GM10248 (cell line): ENCODE measurements at regions of chr12 and their contacts with region 1.

Region 1: DNA sequence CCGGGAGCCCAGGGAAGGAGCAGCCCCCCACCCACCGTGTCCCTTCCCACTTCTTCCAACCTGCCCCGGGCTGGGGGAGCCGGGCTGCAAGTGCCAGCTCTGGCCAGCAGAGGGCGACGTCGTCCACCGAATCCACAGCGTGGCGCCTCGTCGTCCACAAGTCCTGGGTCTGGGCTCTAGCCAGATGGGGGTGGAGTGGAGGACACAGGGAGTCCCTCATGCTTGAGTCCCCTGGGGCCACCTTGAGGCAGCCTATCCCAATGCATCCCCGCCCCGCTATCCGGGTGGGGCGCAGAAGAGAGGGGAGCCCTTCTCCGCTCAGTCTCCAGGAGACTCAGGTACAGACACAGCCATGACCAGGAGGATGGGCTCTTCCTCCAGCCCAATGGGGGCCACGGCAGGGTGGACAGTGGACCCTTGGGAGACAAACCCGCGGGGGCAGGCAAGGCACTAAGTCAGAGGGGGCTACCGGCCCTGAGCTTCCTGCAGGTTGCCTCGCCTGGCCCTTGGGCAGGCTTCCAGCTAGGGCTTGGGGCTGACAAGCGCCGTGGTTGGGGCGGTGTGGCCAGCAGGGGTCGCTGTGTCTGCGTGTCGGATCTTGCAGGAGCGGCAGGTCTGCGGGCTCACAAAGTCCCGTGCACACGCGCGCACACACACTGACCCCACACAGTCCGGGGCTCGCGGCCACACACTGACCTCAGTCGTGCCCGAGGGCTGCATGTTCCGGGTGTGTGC is 5.5 kb downstream of the AQP5 start:
- DNase-seq: peak; percentile 91
- CTCF ChIP-seq: peak; percentile 98

Region 2: GRCh38 chr12:49750027-49750995 is 216.9 kb before region 1 on chr12:
- CTCF ChIA-PET with region 1: no interaction called
- POLR2A ChIA-PET with region 1: no interaction called
- DNase-seq: no peak
- CTCF ChIP-seq: peak; percentile 21

Region 3: DNA sequence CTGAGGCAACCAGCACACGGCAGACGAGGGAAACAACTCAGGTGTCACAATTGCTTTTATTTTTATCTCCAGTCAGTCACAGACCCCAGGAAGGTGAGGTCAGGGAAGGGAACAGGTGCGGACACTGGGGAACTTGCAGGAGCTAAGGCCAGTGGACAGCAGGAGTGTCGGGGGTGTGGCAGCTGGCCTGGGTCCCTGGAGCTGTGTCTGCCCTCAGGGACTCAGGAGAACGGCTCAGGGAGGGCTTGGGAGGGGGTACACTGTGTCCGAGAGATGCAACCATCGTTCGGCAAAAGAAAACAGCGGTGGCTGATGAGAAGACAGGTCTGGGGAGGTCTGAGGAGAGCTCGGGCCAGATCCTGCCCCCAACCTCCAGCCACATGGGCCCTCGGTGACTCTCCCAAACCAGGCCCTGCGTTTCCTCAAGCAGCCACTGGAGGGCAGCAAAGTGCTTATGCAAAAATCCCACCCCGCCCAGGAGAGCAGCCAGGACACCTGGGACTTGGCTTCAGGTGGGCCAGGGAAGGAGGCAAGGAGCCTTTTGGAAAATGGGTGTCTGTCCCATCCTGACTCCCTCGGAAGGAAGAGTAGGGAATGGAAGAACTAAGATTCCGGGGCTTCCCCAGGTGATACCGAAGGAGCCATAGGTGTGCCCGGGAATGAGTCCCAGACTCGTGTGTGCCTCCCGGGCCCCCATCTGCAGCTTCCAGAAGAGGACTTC is 100.2 kb before region 1 on chr12:
- CTCF ChIA-PET with region 1: interaction called, 12 read pairs
- POLR2A ChIA-PET with region 1: no interaction called
- DNase-seq: peak; percentile 93
- CTCF ChIP-seq: peak; percentile 94

Region 4: DNA sequence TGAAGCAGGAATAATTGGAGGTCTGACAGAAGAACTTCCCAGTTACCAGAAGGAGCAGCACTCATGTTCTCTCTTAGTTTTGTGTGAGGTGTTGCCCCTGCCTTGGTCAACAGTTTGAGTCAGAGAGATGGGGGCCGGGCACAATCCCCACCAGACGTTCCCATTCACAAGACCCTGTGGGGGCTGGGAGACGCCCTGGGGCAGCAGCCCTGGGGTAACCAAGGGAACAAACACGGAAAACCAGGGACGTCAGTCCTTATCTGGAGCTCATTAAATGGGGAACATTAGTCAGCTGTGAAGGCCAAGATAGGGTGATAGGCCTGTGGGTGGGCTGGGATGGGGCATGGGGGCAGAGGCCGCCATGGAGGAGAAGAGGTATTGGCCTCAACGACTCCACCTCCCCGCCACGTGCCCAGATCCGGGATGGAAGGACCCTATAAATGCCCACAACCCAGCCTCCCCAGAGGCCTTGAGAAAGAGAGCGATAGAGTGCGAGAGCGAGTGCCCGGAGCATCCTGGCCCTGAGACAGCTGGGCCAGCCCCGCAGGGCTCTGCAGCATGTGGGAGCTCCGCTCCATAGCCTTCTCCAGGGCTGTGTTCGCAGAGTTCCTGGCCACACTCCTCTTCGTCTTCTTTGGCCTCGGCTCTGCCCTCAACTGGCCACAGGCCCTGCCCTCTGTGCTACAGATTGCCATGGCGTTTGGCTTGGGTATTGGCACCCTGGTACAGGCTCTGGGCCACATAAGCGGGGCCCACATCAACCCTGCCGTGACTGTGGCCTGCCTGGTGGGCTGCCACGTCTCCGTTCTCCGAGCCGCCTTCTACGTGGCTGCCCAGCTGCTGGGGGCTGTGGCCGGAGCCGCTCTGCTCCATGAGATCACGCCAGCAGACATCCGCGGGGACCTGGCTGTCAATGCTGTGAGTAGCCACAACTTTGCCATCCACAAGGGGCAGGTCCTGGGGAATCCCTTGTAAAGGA is 16.6 kb before region 1 on chr12 and contains the start of gene AQP2:
- CTCF ChIA-PET with region 1: interaction called, 56 read pairs
- POLR2A ChIA-PET with region 1: no interaction called
- DNase-seq: no peak
- CTCF ChIP-seq: no peak

Region 5: DNA sequence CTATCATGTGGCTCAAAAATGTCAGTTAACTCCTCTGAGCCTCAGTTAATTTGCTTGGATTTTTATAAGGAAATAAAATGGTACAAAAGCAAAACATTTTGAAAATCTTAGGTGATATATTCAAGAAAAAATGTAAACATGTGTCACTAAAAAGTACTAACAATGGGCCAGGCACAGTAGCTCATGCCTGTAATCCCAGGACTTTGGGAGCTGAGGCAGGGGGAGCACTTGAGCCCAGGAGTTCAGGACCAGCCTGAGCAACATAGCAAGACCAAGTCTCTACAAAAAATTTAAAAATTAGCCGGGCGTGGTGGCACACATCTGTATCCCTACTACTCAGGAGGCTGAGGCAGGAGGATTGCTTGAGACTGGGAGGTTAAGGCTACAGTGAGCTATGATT is 31.2 kb after region 1 on chr12:
- CTCF ChIA-PET with region 1: interaction called, 67 read pairs
- POLR2A ChIA-PET with region 1: no interaction called
- DNase-seq: no peak
- CTCF ChIP-seq: no peak

Region 6: GRCh38 chr12:50025187-50026059 is 58.2 kb after region 1 on chr12 and contains the start of gene RACGAP1:
- CTCF ChIA-PET with region 1: interaction called, 13 read pairs
- POLR2A ChIA-PET with region 1: no interaction called
- DNase-seq: peak; percentile 98
- CTCF ChIP-seq: no peak

Region 7: DNA sequence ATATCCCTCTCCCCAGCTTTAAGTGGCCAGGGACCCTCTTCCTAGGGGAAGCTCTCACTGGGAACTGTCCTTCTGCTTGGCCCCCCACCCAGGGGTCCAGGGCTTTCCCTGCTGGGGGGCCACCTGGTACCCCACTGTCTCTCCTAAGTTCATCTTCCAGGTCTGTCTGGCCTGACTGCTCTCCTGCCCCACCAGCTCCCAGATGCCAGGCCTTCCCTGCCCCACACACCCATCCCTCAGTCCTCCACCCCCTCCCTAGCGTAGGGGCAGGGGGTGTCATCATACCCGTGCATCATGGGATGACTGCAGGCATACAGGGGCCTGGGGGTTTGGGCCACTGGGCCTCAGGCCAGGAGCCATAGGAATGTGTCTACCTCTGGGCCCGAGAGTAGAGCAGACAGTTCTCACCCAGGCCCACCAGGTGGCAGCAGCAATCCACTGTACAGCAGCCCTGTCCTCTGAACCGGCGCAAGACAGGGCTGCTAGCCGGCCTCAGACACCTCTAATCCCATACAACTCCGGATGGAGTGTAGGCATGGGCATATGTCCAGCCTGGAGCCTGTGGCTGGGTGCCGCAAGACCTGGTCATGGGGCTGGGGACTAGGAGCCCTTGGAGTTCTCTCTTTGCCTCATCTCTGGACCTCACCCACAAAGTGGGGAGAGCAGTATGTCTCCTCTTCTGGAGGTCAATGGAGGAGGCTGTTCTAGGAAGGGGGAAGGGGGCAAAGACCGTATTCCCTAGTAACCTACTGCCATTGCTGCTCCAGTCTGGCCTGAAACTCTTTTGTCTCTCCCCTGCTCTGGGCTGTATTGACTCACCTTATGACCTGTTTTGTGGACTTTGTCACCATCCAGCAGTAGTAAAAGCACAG is 108.0 kb after region 1 on chr12:
- CTCF ChIA-PET with region 1: interaction called, 243 read pairs
- POLR2A ChIA-PET with region 1: no interaction called
- DNase-seq: peak; percentile 89
- CTCF ChIP-seq: peak; percentile 94

Region 8: GRCh38 chr12:50145439-50145838 is 178.2 kb after region 1 on chr12:
- CTCF ChIA-PET with region 1: no interaction called
- POLR2A ChIA-PET with region 1: no interaction called
- DNase-seq: no peak
- CTCF ChIP-seq: no peak

Region 9: GRCh38 chr12:50201978-50202521 is 234.8 kb after region 1 on chr12:
- CTCF ChIA-PET with region 1: no interaction called
- POLR2A ChIA-PET with region 1: no interaction called
- DNase-seq: no peak
- CTCF ChIP-seq: no peak